ENCODE measurements at regions of chr14 and their contacts with region 1.

Region 1: DNA sequence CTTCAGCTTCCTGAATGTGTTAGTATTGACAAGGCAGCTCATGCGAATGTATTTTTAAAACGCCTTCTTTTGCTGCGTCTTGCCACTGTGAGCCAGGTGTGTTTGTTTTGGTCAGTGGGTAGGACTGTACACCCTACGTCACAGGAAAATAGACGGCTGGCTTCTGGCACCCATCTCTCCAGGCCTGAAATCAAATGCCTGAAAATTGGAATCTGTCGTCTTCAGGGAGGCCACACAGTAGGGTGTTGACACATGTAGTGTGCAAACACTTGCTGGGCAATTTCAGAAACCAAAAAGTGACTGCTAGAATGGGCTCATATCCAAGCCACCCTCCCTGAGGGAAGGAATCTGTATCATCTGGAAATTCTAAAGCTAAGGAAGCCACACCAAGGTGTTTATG is 209.3 kb downstream of the TTC8 start:
- DNase-seq: no peak
- H3K4me3 ChIP-seq: no peak overlapping the region
- H3K27ac ChIP-seq: no peak overlapping the region
- H3K4me1 ChIP-seq: no peaks in the 10 kb centered on the region
- H3K27me3 ChIP-seq: no peaks in the 10 kb centered on the region
- CTCF ChIP-seq: no peak
- POLR2A ChIP-seq: no peak

Region 2: GRCh38 chr14:89107626-89108025 is 73.9 kb after region 1 on chr14:
- intact Hi-C with region 1: no loop called
- DNase-seq: no peak
- H3K4me3 ChIP-seq: no peak overlapping the region
- H3K27ac ChIP-seq: no peak overlapping the region
- H3K4me1 ChIP-seq: no peaks in the 10 kb centered on the region
- H3K27me3 ChIP-seq: no peaks in the 10 kb centered on the region
- CTCF ChIP-seq: no peak
- POLR2A ChIP-seq: no peak

Region 3: GRCh38 chr14:89178802-89179535 is 145.2 kb after region 1 on chr14:
- intact Hi-C with region 1: loop called in 1 of 2 experiments (anchors 10 kb)
- DNase-seq: peak in 1 of 7 donors; percentile 37
- H3K4me3 ChIP-seq: no peak overlapping the region
- H3K27ac ChIP-seq: peak overlapping the region in 1 of 5 donors; percentile 0
- H3K4me1 ChIP-seq: peaks cover 0 to under 1% of the 10 kb centered on the region in 2 donors
- H3K27me3 ChIP-seq: no peaks in the 10 kb centered on the region
- CTCF ChIP-seq: no peak
- POLR2A ChIP-seq: no peak

Region 4: GRCh38 chr14:89767861-89768268 is 734.1 kb after region 1 on chr14:
- intact Hi-C with region 1: loop called (anchors 5 to 10 kb)
- DNase-seq: peak; percentile 35 to 63 (median 47)
- H3K4me3 ChIP-seq: no peak overlapping the region
- H3K27ac ChIP-seq: no peak overlapping the region
- H3K4me1 ChIP-seq: no peaks in the 10 kb centered on the region
- H3K27me3 ChIP-seq: no peaks in the 10 kb centered on the region
- CTCF ChIP-seq: peak; percentile 38 to 73 (median 66)
- POLR2A ChIP-seq: no peak

Region 5: GRCh38 chr14:89915114-89915878 is 881.5 kb after region 1 on chr14:
- intact Hi-C with region 1: loop called (anchors 5 to 10 kb)
- DNase-seq: peak; percentile 34 to 91 (median 61)
- H3K4me3 ChIP-seq: no peak overlapping the region
- H3K27ac ChIP-seq: no peak overlapping the region
- H3K4me1 ChIP-seq: peaks cover 0 to 13% of the 10 kb centered on the region in 2 donors
- H3K27me3 ChIP-seq: no peaks in the 10 kb centered on the region
- CTCF ChIP-seq: peak; percentile 83 to 96 (median 89)
- POLR2A ChIP-seq: no peak